Breast epithelium (tissue), 4 donors: ENCODE measurements at regions of chr7 and their contacts with region 1.

Region 1: DNA sequence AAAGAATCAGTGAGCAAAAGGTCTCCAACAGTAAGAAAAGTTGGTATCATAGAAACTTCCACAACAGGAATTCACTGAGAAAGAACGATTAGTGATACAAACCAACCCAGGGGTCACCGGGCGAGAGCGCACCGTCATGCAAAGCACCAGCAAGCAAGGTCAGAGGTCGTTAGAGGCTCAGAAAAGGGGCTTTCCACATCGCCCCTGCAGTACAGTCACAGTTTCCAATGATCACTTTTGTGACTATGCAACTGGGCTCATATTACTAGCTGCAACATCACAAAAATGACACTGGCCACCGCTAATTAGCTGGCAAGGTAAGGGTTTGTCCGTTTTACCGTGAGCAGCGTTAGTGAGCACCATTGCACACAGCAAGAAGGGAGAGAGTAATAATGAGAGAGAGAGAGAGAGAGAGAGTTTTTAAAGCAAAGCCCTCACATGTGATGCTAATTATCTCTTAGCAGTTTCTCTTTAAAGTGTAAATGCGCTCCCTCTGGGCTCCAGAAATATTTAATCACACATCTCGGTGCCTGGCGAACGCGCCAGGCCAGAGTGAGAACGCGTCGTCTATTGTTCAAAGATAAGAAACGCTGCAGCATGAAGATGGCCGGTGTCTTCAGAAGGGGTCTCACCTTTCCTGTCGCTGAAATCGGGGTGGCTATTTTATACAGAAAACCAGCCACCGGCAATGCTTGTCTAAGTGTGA is 237.5 kb downstream of the DNAJB6 start:
- DNase-seq: no peak
- H3K4me3 ChIP-seq: no peak overlapping the region
- H3K27ac ChIP-seq: no peak overlapping the region
- H3K4me1 ChIP-seq: no peaks in the 10 kb centered on the region
- H3K27me3 ChIP-seq: no peaks in the 10 kb centered on the region
- CTCF ChIP-seq: no peak
- POLR2A ChIP-seq: no peak

Region 2: GRCh38 chr7:157554393-157555238 is 19.7 kb before region 1 on chr7:
- intact Hi-C with region 1: loop called (anchors 1 kb)
- DNase-seq: peak in 1 of 2 donors; percentile 24
- H3K4me3 ChIP-seq: no peak overlapping the region
- H3K27ac ChIP-seq: no peak overlapping the region
- H3K4me1 ChIP-seq: no peaks in the 10 kb centered on the region
- H3K27me3 ChIP-seq: no peaks in the 10 kb centered on the region
- CTCF ChIP-seq: no peak
- POLR2A ChIP-seq: no peak

Region 3: GRCh38 chr7:157601530-157601929 is 27.3 kb after region 1 on chr7:
- intact Hi-C with region 1: no loop called
- DNase-seq: no peak
- H3K4me3 ChIP-seq: no peak overlapping the region
- H3K27ac ChIP-seq: no peak overlapping the region
- H3K4me1 ChIP-seq: no peaks in the 10 kb centered on the region
- H3K27me3 ChIP-seq: peaks cover 0 to 16% of the 10 kb centered on the region in 2 donors
- CTCF ChIP-seq: no peak
- POLR2A ChIP-seq: no peak

Region 4: DNA sequence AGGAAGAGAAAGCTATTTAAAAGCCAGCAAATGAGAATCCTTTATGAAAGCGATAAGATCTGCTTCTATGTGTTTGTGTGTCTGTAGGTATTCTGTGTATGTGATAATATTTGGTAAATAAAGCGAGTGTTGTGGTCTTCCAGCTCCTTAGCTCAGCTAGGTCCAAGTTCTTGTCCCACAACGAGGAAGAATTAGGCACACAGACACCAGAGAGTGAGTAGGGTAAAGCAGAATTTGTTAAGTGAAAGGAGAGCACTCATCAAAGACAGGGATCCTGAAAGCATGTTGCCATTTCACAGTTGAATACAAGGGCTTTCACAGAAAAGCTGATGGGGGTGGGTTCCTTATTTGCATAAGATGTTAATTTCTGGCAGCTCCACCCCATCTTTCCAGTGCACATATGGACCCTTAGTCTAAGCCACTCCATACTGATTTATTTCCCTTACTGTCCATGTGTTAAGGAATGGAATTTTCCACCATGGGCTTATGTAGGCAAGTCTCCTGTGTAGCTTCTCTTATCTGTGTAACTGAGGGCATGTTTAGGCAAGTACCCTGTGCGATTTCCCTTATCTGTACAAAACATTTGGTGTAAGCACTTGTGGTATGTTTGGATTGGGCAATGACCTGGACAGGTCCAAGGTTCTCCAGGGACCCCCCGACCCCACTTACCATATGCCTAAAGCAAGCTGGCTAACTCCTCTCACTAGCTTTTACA is 1736.3 kb after region 1 on chr7:
- intact Hi-C with region 1: no loop called
- DNase-seq: no peak
- H3K4me3 ChIP-seq: no peak overlapping the region
- H3K27ac ChIP-seq: no peak overlapping the region
- H3K4me1 ChIP-seq: no peaks in the 10 kb centered on the region
- H3K27me3 ChIP-seq: no peaks in the 10 kb centered on the region
- CTCF ChIP-seq: no peak
- POLR2A ChIP-seq: no peak